GM12878 (cell line): ENCODE measurements at regions of chr6 and their contacts with region 1.

Region 1: DNA sequence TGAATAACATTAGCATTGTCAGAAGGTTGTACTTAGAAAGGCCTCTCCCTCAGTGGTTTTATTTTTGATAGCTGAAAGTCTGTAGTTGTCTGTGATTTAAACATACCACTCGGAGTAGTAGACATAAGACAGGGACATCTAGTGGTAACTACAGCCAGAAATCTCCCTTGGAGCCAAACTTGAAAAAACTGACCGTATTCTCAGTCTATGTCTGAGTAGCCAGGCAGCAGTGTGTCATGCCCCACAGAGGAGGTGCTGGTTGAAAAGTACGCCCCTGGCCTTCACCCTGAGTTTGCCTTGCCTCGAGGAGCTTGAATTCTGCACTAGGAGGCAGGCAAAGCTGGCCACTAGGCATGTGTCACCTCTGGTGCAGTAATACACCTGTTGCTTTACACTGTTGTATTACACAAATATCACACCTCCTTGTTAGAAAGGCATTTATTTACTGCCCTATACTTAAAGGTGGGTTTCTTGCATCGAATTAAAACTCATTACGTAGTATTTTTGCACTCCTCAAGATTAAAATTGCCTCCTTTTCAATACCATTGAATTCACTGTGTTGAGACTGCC is 20.8 kb downstream of the ZBTB2 start:
- DNase-seq: no peak
- ATAC-seq: no peak
- H3K4me3 ChIP-seq: no peak overlapping the region
- H3K27ac ChIP-seq: no peak overlapping the region
- H3K4me1 ChIP-seq: no peaks in the 10 kb centered on the region; the same call in 1 of the 2 replicates
- H3K27me3 ChIP-seq: no peaks in the 10 kb centered on the region
- CTCF ChIP-seq: no peak
- EP300 ChIP-seq: no peak
- POLR2A ChIP-seq: no peak
- RAD21 ChIP-seq: no peak

Region 2: DNA sequence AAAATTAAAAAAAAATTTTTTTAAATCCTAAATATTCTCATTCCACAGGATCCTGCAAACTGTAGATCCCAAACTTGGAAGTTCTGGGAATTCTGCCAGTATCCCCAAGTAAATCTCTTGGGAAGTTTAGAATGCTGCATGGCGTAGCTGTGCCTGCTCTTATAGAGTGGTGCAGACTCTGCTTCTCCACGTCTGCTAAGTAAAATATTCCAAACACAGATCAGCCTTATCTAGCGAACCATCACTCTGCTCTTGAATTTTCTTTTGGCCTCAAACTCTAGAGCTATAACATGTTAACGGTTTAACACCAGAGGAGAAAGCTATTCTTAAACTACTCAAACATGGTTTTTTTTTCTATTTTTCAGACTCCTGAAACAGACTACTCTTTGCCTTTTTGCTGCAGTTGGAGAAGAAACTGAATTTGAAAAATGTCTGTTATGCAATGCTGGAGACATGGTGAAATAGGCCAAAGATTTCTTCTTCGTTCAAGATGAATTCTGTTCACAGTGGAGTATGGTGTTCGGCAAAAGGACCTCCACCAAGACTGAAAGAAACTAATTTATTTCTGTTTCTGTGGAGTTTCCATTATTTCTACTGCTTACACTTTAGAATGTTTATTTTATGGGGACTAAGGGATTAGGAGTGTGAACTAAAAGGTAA is 269.3 kb before region 1 on chr6:
- CTCF ChIA-PET with region 1: no interaction called
- POLR2A ChIA-PET with region 1: no interaction called
- RAD21 ChIA-PET with region 1: no interaction called
- SMC1A ChIA-PET with region 1: no interaction called
- in situ Hi-C with region 1: no loop called
- intact Hi-C with region 1: no loop called
- DNase-seq: no peak
- ATAC-seq: no peak
- H3K4me3 ChIP-seq: no peak overlapping the region
- H3K27ac ChIP-seq: no peak overlapping the region
- H3K4me1 ChIP-seq: no peaks in the 10 kb centered on the region
- H3K27me3 ChIP-seq: no peaks in the 10 kb centered on the region
- CTCF ChIP-seq: no peak
- EP300 ChIP-seq: no peak
- POLR2A ChIP-seq: no peak
- RAD21 ChIP-seq: no peak

Region 3: DNA sequence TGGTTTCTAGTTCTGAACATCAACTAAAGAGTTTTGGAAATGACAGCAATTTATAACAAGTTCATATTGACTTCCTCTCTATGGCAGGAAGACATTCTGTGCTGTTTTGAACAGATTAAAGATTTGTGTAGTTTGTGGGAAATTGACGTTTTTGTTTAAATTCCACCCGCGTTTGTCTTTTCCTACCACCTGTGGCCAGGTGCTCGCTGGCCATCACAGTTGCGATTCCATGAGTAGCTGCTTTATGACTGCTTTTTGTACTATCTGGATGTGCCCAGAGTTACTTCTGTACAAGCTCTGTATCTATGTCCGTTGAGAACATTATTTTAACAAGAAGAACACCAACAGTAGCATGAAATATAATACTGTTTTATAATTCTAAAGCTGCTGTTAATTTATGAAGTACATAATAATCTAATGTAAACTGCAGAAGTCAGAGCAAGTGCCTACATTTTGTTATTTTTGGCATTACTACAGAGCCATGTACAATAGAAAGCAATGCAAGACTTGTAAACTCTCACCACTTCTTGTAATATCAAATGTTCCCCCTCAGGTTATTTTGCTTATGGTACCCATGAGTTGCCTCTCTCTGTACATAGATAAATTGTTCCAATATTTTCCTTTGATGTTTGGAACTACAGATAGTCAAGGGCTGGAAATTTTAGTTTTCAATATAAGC is 12.7 kb before region 1 on chr6:
- CTCF ChIA-PET with region 1: interaction called, 10 read pairs
- POLR2A ChIA-PET with region 1: interaction called, 4 read pairs
- RAD21 ChIA-PET with region 1: no interaction called
- SMC1A ChIA-PET with region 1: no interaction called
- in situ Hi-C with region 1: no loop called
- intact Hi-C with region 1: no loop called
- DNase-seq: no peak
- ATAC-seq: no peak
- H3K4me3 ChIP-seq: no peak overlapping the region
- H3K27ac ChIP-seq: no peak overlapping the region
- H3K4me1 ChIP-seq: no peaks in the 10 kb centered on the region
- H3K27me3 ChIP-seq: no peaks in the 10 kb centered on the region
- CTCF ChIP-seq: no peak
- EP300 ChIP-seq: no peak
- POLR2A ChIP-seq: no peak
- RAD21 ChIP-seq: no peak

Region 4: DNA sequence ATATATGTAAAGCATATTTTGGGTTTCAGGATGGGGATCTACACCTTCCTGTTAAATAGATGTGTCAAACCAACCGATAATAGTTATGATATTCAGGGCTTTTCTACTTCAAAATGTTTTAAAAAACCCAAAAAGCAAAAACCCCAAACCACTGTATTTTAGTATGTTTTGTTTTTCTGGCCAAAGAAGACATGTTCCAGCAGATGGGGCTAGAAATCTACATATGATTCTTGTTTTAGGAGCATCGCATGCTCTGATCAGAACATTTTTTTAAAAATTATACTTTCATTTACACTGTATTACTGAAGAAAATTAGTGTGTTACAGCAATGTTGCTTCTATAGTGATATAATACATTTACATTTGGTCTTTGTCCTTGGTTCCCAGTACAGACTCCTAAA is 70.3 kb after region 1 on chr6:
- CTCF ChIA-PET with region 1: no interaction called
- POLR2A ChIA-PET with region 1: no interaction called
- RAD21 ChIA-PET with region 1: no interaction called
- SMC1A ChIA-PET with region 1: no interaction called
- in situ Hi-C with region 1: no loop called
- intact Hi-C with region 1: no loop called
- DNase-seq: no peak
- ATAC-seq: peak; percentile 65
- H3K4me3 ChIP-seq: peak overlapping the region; percentile 32; the same call in 1 of the 2 replicates
- H3K27ac ChIP-seq: peak overlapping the region; percentile 61
- H3K4me1 ChIP-seq: peaks cover 13% of the 10 kb centered on the region
- H3K27me3 ChIP-seq: no peaks in the 10 kb centered on the region
- CTCF ChIP-seq: peak; percentile 24 to 50 (median 49); a peak in 5 of 6 replicates
- EP300 ChIP-seq: no peak
- POLR2A ChIP-seq: no peak
- RAD21 ChIP-seq: peak; percentile 67

Region 5: GRCh38 chr6:151534576-151534975 is 164.0 kb after region 1 on chr6:
- CTCF ChIA-PET with region 1: no interaction called
- POLR2A ChIA-PET with region 1: no interaction called
- RAD21 ChIA-PET with region 1: no interaction called
- SMC1A ChIA-PET with region 1: no interaction called
- in situ Hi-C with region 1: no loop called
- intact Hi-C with region 1: no loop called
- DNase-seq: no peak
- ATAC-seq: no peak
- H3K4me3 ChIP-seq: no peak overlapping the region
- H3K27ac ChIP-seq: no peak overlapping the region
- H3K4me1 ChIP-seq: no peaks in the 10 kb centered on the region
- H3K27me3 ChIP-seq: no peaks in the 10 kb centered on the region
- CTCF ChIP-seq: no peak
- EP300 ChIP-seq: no peak
- POLR2A ChIP-seq: no peak
- RAD21 ChIP-seq: no peak